OCI-LY7 (cell line): ENCODE measurements at regions of chr16 and their contacts with region 1.

Region 1: DNA sequence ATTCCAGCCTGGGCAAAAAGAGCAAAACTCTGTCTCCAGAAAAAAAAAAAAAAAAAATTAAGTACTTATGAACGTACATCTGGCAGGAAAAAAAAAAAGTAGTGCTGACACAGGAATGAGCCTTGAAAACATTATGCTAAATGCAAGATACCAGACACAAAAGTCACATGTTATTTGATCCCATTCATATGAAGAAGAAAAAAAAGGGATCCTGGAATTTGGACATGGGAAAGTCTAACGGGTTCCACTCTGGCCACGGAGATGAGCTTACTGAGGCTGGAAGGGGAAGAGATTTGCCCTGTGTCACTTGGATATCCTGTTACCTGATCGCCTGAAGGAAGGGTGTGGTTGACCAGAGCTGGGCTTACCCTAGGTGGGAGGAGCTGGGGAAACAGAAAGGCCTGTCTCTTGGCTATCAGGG is 251.9 kb downstream of the PARN start:
- DNase-seq: no peak
- H3K4me3 ChIP-seq: no peak overlapping the region
- H3K27ac ChIP-seq: no peak overlapping the region
- H3K4me1 ChIP-seq: peaks cover 39% of the 10 kb centered on the region
- CTCF ChIP-seq: no peak

Region 2: GRCh38 chr16:14263011-14263410 is 115.1 kb before region 1 on chr16:
- CTCF ChIA-PET with region 1: no interaction called
- POLR2A ChIA-PET with region 1: no interaction called
- intact Hi-C with region 1: no loop called
- DNase-seq: no peak
- H3K4me3 ChIP-seq: no peak overlapping the region
- H3K27ac ChIP-seq: no peak overlapping the region
- H3K4me1 ChIP-seq: no peaks in the 10 kb centered on the region
- CTCF ChIP-seq: no peak

Region 3: DNA sequence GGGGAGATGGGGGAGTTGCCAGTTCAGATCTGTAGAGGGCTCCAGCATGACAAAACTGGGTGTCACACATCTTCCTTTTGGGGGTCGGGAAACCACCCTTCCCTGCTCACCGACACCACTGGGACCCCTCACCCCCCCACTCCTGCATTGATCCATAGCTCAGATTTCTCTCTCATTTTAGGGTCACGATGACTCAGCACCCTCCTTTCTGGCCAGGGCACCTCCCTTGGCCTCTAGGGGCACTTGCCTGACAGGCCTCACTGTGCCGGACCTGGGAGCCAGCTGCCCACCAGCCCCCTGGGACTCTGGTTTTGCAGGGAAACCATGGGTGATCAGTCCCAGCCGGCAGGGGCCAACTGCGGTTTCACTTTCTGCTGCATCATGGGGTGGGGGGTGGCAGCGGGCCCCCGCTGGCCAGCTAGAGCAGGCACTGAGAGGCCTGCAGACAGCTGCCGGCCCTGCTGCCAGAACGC is 67.6 kb before region 1 on chr16:
- CTCF ChIA-PET with region 1: interaction called, 9 read pairs
- POLR2A ChIA-PET with region 1: interaction called, 5 read pairs
- intact Hi-C with region 1: loop called (anchors 2 kb)
- DNase-seq: peak; percentile 84
- H3K4me3 ChIP-seq: peak overlapping the region; percentile 99
- H3K27ac ChIP-seq: peak overlapping the region; percentile 94
- H3K4me1 ChIP-seq: peaks cover 89% of the 10 kb centered on the region
- CTCF ChIP-seq: peak; percentile 65

Region 4: DNA sequence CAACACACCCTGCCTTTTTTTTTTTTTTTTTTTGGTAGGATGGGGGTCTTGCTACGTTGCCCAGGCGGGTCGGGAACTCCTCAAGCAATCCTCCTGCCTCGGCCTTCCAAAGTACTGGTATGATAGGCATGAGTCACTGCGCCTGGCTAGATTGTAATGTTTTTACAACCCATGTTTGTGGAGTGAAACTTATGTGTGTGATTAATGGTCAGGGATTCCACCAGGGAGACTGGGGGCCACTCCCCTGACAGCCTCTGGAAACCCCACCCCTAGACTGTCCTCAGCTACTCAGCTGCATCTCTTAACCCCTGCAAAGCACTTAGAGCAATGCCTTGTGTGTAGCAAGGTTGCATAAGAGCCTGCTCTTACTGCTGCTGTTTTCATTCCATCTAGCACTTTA is 31.4 kb after region 1 on chr16:
- CTCF ChIA-PET with region 1: no interaction called
- POLR2A ChIA-PET with region 1: no interaction called
- intact Hi-C with region 1: no loop called
- DNase-seq: no peak
- H3K4me3 ChIP-seq: no peak overlapping the region
- H3K27ac ChIP-seq: no peak overlapping the region
- H3K4me1 ChIP-seq: peaks cover 15% of the 10 kb centered on the region
- CTCF ChIP-seq: no peak